Activated B cell treated with CpG ODN at 0.5 μM for 24 hours (primary cell): ENCODE measurements at regions of chr2 and their contacts with region 1.

Region 1: DNA sequence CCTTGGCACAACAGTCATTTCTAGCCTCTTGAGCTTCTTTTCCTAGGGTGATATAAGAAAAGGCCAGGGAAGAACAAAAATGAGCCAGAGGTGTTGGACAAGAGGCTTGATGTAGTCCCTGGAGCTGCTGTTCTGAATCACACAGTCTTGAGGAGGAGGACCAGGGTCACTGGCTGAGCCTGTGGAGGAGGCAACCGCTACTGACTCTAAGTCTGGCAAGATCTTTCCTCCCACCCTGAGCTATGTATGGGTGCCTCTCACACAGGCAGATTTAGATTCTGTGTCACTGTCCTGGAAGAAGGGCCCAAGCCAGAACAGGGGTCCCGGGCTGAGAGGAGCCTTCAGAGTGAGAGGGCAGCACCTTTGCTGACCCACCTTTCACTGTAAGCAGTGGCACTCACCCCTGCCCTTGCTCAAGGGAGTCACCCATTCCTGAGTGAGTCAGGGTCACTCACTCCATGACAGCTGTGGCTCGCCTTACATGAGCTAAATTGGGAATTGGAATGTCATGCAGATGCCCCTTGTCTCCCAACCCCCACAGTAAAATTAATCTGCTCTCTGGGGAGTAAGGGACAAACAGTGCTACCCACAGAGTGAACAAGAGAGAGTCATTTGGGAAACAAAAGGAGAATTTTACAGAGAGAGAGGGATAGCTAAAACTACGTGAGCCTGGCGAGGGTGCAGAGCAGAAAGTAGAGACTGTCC is at the start of gene TRIM54:
- DNase-seq: no peak
- ATAC-seq: no peak
- H3K4me3 Mint-ChIP-seq: no peak within 1 kb of the TSS
- H3K27ac Mint-ChIP-seq: no peak within 1 kb of the TSS
- H3K4me1 Mint-ChIP-seq: peaks cover 5% of the 10 kb centered on the region
- H3K27me3 Mint-ChIP-seq: peaks cover 21% of the 10 kb centered on the region
- CTCF ChIP-seq: no peak
- total RNA-seq, gene TRIM54: not detected in 2 replicates

Region 2: DNA sequence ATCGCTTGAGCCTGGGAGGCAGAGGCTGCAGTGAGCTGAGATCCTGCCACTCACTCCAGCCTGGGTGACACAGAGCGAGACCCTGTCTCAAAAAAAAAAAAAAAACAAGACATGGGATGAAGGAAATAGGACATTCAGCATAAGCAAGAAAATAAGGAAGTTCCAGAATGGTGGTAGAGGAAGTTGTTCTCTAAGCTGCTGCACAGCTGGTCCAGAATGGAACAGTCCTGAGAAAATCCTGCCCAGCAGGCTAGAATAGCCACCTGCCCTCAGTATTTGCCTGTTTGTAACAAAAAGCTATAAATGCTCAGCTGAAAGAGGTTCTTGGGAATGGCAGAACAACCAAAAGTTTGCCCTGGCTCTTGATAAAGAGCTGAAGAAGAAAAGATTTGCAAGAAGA is 322.7 kb before region 1 on chr2:
- CTCF ChIA-PET with region 1: interaction called, 100 read pairs
- POLR2A ChIA-PET with region 1: interaction called, 7 read pairs
- intact Hi-C with region 1: loop called (anchors 1 kb)
- DNase-seq: no peak
- ATAC-seq: no peak
- H3K4me3 Mint-ChIP-seq: no peak overlapping the region
- H3K27ac Mint-ChIP-seq: no peak overlapping the region
- H3K4me1 Mint-ChIP-seq: no peaks in the 10 kb centered on the region
- H3K27me3 Mint-ChIP-seq: peaks cover 21% of the 10 kb centered on the region
- CTCF ChIP-seq: no peak

Region 3: GRCh38 chr2:27086090-27086723 is 195.8 kb before region 1 on chr2:
- CTCF ChIA-PET with region 1: interaction called, 4 read pairs
- POLR2A ChIA-PET with region 1: no interaction called
- intact Hi-C with region 1: loop called (anchors 1 kb)
- DNase-seq: peak; percentile 99
- ATAC-seq: peak; percentile 92
- H3K4me3 Mint-ChIP-seq: peak overlapping the region; percentile 87
- H3K27ac Mint-ChIP-seq: peak overlapping the region; percentile 86
- H3K4me1 Mint-ChIP-seq: peaks cover 18% of the 10 kb centered on the region
- H3K27me3 Mint-ChIP-seq: no peaks in the 10 kb centered on the region
- CTCF ChIP-seq: peak; percentile 44

Region 4: DNA sequence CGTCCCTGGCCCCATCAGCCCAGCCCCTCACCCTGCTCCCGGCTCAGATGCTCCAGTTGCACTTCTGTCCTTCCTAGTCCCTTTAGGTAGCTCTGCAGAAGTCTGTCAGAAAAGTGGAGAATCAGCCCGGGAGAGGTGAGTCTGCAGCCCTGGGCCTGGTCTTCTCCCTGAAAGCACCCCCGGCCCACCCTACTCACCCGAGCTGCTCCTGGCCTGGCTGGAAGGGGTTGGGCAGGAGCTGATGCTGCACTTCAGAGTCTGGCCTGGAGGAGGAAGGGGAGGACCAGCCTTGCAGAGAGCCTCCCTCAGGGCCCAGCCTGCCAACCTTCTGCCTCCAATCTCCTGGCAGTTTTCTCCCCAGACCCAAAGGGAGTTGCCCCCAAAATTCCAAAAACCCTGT is 179.7 kb before region 1 on chr2:
- CTCF ChIA-PET with region 1: interaction called, 38 read pairs
- POLR2A ChIA-PET with region 1: interaction called, 4 read pairs
- intact Hi-C with region 1: loop called (anchors 1 kb)
- DNase-seq: no peak
- ATAC-seq: no peak
- H3K4me3 Mint-ChIP-seq: no peak overlapping the region
- H3K27ac Mint-ChIP-seq: no peak overlapping the region
- H3K4me1 Mint-ChIP-seq: no peaks in the 10 kb centered on the region
- H3K27me3 Mint-ChIP-seq: peaks cover 6% of the 10 kb centered on the region
- CTCF ChIP-seq: no peak

Region 5: DNA sequence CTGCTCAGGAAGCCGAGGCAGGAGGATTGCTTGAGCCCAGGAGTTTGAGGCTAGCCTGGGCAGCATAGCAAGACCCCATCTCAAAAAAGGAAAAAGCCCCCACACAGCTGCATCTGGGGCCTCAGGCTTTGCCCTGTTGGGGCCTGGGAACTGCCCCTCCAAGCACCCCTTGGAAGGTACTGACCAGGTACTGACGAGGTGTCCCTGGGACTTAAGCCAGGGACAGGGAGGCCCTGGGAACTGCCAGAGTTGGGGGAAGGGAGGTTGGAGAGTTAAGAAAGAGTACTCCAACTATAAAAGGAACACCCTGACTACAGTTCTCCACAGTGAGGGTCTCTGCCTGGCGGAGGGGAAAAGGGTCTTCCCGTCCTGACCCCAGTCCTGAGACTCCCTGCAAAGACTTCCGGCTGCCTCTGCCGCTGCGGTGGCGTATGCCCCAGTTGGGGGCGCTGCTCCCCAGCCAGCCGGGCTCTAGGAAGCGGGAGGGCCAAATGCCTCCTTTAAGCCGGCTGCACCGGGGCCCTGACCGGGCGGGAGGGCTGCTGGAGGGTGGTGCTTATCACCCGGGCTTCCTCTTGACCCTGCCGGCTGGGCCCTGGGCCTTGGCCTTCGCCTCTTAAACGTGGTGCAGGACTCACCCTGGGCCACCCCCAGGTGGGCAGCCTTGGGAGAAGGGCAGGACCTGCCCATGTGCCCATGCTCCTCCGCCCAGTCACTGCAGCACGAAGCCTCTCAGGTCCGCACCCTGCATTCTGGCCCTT is 31.9 kb before region 1 on chr2:
- CTCF ChIA-PET with region 1: interaction called, 11 read pairs
- POLR2A ChIA-PET with region 1: interaction called, 6 read pairs
- intact Hi-C with region 1: loop called (anchors 1 kb)
- DNase-seq: no peak
- ATAC-seq: no peak
- H3K4me3 Mint-ChIP-seq: no peak overlapping the region
- H3K27ac Mint-ChIP-seq: no peak overlapping the region
- H3K4me1 Mint-ChIP-seq: no peaks in the 10 kb centered on the region
- H3K27me3 Mint-ChIP-seq: peaks cover 15% of the 10 kb centered on the region
- CTCF ChIP-seq: no peak

Region 6: DNA sequence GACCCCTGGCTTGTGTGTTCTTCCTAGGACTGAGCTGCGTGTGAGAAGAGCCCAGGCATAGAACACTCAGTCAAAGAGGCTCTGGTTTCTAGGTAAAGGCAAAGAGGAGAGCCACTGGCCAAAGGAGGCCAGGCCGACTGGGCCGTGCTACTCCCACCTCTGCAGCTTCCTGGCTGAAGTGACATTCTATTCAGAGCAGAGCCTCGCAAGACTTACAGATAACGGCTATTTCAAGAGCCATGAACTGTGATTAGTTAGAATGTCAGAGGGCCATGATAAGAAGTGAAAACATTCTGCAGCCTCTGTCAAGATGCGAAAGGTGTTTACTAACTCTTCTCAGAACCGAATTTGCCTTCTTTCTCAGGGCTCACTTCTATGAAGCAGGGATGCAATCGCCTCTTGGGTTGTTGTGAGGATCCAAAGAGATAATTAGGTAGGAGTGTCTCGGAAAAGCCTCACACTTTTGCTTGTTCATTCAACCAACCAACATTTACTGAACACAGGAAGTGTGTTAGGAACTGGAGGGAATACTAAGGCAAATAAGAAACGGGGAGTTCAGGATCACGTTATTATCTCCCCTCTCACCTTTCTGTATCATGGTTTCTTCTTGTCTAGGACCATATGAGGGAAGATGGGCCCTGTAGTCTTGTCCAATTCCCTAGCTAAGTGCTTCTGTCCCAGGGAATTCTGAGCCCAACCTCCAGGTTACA is 10.2 kb before region 1 on chr2:
- CTCF ChIA-PET with region 1: interaction called, 22 read pairs
- POLR2A ChIA-PET with region 1: interaction called, 4 read pairs
- intact Hi-C with region 1: no loop called
- DNase-seq: no peak
- ATAC-seq: no peak
- H3K4me3 Mint-ChIP-seq: no peak overlapping the region
- H3K27ac Mint-ChIP-seq: no peak overlapping the region
- H3K4me1 Mint-ChIP-seq: no peaks in the 10 kb centered on the region
- H3K27me3 Mint-ChIP-seq: peaks cover 12% of the 10 kb centered on the region
- CTCF ChIP-seq: no peak

Region 7: DNA sequence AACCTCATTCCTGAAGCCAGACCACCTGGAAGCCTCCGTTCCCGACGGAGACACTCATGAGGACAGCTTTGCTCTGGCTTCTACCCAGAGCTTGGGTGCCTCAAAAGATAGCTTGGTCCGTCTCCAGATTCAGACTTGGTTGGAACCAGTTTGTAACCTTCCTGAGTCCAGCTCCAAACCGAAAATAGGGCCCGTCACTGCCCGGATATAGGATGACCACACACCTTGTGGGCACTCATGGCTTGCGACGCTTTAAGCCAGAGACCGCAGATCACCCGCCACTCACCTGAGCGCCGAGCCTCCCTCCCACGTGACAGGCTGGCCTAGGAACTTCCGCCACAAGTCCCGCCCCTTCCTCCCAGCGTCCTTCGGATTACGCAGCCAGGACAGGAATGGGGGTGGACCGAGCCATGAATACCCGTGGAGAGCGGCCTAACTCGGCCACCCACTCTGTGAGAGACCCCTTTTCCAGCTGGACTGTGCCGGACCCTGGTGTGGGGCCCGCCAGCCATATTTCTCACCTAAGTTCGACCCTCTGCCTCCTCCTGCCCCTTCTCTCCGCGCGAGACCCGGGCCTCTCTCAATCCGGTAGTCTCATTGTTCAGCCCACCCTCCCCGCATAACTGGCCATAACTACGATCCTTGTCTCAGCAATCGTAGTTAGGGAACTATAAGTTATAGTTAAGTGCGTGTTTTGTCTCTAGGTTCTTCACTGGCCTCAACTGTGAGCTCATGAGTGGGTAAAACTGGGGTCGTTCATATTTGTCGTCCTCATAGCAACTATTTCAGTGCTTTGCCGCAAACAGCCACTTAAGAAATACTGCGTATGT is 41.0 kb after region 1 on chr2 and contains the start of gene MPV17:
- CTCF ChIA-PET with region 1: no interaction called
- POLR2A ChIA-PET with region 1: no interaction called
- intact Hi-C with region 1: loop called (anchors 1 kb)
- DNase-seq: peak; percentile 79
- ATAC-seq: peak; percentile 95
- H3K4me3 Mint-ChIP-seq: peak within 1 kb of the TSS; percentile 99
- H3K27ac Mint-ChIP-seq: peak within 1 kb of the TSS; percentile 96
- H3K4me1 Mint-ChIP-seq: peaks cover 25% of the 10 kb centered on the region
- H3K27me3 Mint-ChIP-seq: no peaks in the 10 kb centered on the region
- CTCF ChIP-seq: no peak
- total RNA-seq, gene MPV17: 78.1 and 98.3 TPM in 2 replicates